ENCODE measurements at regions of chr4 and their contacts with region 1.

Region 1: GRCh38 chr4:158624889-158625478 is 46.7 kb downstream of the C4orf46 start:
- DNase-seq: peak in 1 of 2 experiments; percentile 44
- H3K4me3 ChIP-seq: no peak overlapping the region
- H3K4me3 Mint-ChIP-seq: no peak overlapping the region
- H3K27ac Mint-ChIP-seq: no peak overlapping the region
- H3K4me1 ChIP-seq: no peaks in the 10 kb centered on the region
- H3K4me1 Mint-ChIP-seq: no peaks in the 10 kb centered on the region
- H3K27me3 ChIP-seq: no peaks in the 10 kb centered on the region
- H3K27me3 Mint-ChIP-seq: no peaks in the 10 kb centered on the region
- CTCF ChIP-seq: peak; percentile 52 to 69

Region 2: GRCh38 chr4:158193171-158193749 is 431.7 kb before region 1 on chr4:
- CTCF ChIA-PET with region 1: no interaction called
- POLR2A ChIA-PET with region 1: no interaction called
- intact Hi-C with region 1: loop called (anchors 10 kb)
- DNase-seq: peak in 1 of 2 experiments; percentile 37
- H3K4me3 ChIP-seq: no peak overlapping the region
- H3K4me3 Mint-ChIP-seq: no peak overlapping the region
- H3K27ac Mint-ChIP-seq: no peak overlapping the region
- H3K4me1 ChIP-seq: no peaks in the 10 kb centered on the region
- H3K4me1 Mint-ChIP-seq: peaks cover 6% of the 10 kb centered on the region
- H3K27me3 ChIP-seq: no peaks in the 10 kb centered on the region
- H3K27me3 Mint-ChIP-seq: no peaks in the 10 kb centered on the region
- CTCF ChIP-seq: peak; percentile 35 to 44

Region 3: GRCh38 chr4:158253350-158253980 is 371.5 kb before region 1 on chr4:
- CTCF ChIA-PET with region 1: no interaction called
- POLR2A ChIA-PET with region 1: no interaction called
- intact Hi-C with region 1: loop called (anchors 1 kb)
- DNase-seq: peak in 1 of 2 experiments; percentile 71
- H3K4me3 ChIP-seq: no peak overlapping the region
- H3K4me3 Mint-ChIP-seq: no peak overlapping the region
- H3K27ac Mint-ChIP-seq: no peak overlapping the region
- H3K4me1 ChIP-seq: no peaks in the 10 kb centered on the region
- H3K4me1 Mint-ChIP-seq: no peaks in the 10 kb centered on the region
- H3K27me3 ChIP-seq: no peaks in the 10 kb centered on the region
- H3K27me3 Mint-ChIP-seq: no peaks in the 10 kb centered on the region
- CTCF ChIP-seq: peak; percentile 44 to 61

Region 4: GRCh38 chr4:158259955-158260575 is 364.9 kb before region 1 on chr4:
- CTCF ChIA-PET with region 1: no interaction called
- POLR2A ChIA-PET with region 1: no interaction called
- intact Hi-C with region 1: loop called (anchors 1 kb)
- DNase-seq: peak in 1 of 2 experiments; percentile 10
- H3K4me3 ChIP-seq: no peak overlapping the region
- H3K4me3 Mint-ChIP-seq: no peak overlapping the region
- H3K27ac Mint-ChIP-seq: no peak overlapping the region
- H3K4me1 ChIP-seq: no peaks in the 10 kb centered on the region
- H3K4me1 Mint-ChIP-seq: no peaks in the 10 kb centered on the region
- H3K27me3 ChIP-seq: no peaks in the 10 kb centered on the region
- H3K27me3 Mint-ChIP-seq: no peaks in the 10 kb centered on the region
- CTCF ChIP-seq: peak in 1 of 2 experiments; percentile 48

Region 5: GRCh38 chr4:158302076-158302866 is 322.7 kb before region 1 on chr4:
- CTCF ChIA-PET with region 1: no interaction called
- POLR2A ChIA-PET with region 1: no interaction called
- intact Hi-C with region 1: no loop called
- DNase-seq: no peak
- H3K4me3 ChIP-seq: no peak overlapping the region
- H3K4me3 Mint-ChIP-seq: no peak overlapping the region
- H3K27ac Mint-ChIP-seq: no peak overlapping the region
- H3K4me1 ChIP-seq: peaks cover 28% of the 10 kb centered on the region
- H3K4me1 Mint-ChIP-seq: peaks cover 23% of the 10 kb centered on the region
- H3K27me3 ChIP-seq: no peaks in the 10 kb centered on the region
- H3K27me3 Mint-ChIP-seq: no peaks in the 10 kb centered on the region
- CTCF ChIP-seq: no peak

Region 6: DNA sequence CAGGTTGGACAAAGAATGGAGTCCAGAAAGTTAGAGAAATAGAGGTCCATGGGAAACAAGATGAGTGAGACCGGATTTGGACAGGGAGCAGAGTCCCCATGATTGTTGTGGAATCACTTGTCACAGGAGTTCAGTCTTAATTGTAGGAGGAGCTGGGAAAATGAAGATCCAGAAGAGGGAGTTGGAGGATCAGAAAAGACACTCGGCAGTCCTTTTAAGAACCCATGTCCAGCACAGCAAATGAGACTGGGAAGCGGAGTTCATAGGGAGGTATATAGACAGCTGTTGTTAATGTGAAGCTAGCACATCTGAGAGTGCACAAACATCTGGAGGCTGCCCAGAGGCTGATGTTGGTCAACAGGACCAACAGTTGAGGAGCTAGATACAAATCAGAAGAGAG is 214.7 kb before region 1 on chr4:
- CTCF ChIA-PET with region 1: interaction called, 3 read pairs
- POLR2A ChIA-PET with region 1: no interaction called
- intact Hi-C with region 1: loop called (anchors 1 kb)
- DNase-seq: peak in 1 of 2 experiments; percentile 2
- H3K4me3 ChIP-seq: no peak overlapping the region
- H3K4me3 Mint-ChIP-seq: no peak overlapping the region
- H3K27ac Mint-ChIP-seq: no peak overlapping the region
- H3K4me1 ChIP-seq: no peaks in the 10 kb centered on the region
- H3K4me1 Mint-ChIP-seq: no peaks in the 10 kb centered on the region
- H3K27me3 ChIP-seq: no peaks in the 10 kb centered on the region
- H3K27me3 Mint-ChIP-seq: peaks cover 7% of the 10 kb centered on the region
- CTCF ChIP-seq: peak in 1 of 2 experiments; percentile 11

Region 7: GRCh38 chr4:158496030-158496741 is 128.8 kb before region 1 on chr4:
- CTCF ChIA-PET with region 1: interaction called, 3 read pairs
- POLR2A ChIA-PET with region 1: no interaction called
- intact Hi-C with region 1: loop called (anchors 5 kb)
- DNase-seq: peak; percentile 39 to 42
- H3K4me3 ChIP-seq: no peak overlapping the region
- H3K4me3 Mint-ChIP-seq: no peak overlapping the region
- H3K27ac Mint-ChIP-seq: no peak overlapping the region
- H3K4me1 ChIP-seq: no peaks in the 10 kb centered on the region
- H3K4me1 Mint-ChIP-seq: no peaks in the 10 kb centered on the region
- H3K27me3 ChIP-seq: no peaks in the 10 kb centered on the region
- H3K27me3 Mint-ChIP-seq: peaks cover 3% of the 10 kb centered on the region
- CTCF ChIP-seq: peak; percentile 35 to 49